GM12878 (cell line): ENCODE measurements at regions of chr15 and their contacts with region 1.

Region 1: DNA sequence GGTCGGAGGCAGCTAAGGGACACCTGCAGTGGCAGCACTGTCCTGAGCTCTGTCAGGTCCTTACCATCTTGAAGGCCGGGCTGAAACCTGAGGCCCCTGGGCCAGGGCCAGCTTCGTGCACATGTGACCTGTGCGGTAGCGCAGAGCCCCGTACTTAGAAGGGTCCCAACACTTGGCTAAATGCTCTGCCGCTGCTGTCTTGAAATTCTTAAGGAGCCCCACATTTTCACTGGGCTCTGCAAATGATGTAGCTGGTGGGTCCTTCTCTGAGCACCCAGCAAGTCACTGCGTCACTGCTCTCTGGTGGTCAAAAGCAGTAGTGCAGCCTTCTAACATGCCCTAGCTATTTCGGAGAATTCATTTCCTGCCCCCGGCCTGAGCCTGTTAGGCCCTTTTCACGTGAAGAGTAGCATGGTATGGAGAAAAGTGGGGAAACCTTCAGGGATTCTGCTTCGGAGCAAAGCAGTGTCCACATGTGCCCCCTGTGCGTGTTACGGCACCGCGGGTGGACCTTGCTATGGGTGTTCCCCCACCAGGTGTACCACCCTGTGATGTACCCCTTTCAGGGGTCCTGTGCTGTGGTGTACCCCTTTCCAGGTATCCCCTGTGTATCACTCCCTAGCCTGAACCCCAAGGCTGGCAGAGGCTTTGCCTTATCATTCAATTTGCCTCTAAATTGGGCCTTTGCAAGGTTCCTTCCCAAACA is 79.7 kb downstream of the TMEM266 start:
- DNase-seq: peak; percentile 51
- ATAC-seq: peak; percentile 96
- H3K4me3 ChIP-seq: no peak overlapping the region
- H3K27ac ChIP-seq: no peak overlapping the region
- H3K4me1 ChIP-seq: no peaks in the 10 kb centered on the region
- H3K27me3 ChIP-seq: no peaks in the 10 kb centered on the region; a peak in 1 of 4 replicates
- CTCF ChIP-seq: peak; percentile 92 to 97 (median 94)
- EP300 ChIP-seq: no peak
- POLR2A ChIP-seq: no peak
- RAD21 ChIP-seq: peak; percentile 93

Region 2: DNA sequence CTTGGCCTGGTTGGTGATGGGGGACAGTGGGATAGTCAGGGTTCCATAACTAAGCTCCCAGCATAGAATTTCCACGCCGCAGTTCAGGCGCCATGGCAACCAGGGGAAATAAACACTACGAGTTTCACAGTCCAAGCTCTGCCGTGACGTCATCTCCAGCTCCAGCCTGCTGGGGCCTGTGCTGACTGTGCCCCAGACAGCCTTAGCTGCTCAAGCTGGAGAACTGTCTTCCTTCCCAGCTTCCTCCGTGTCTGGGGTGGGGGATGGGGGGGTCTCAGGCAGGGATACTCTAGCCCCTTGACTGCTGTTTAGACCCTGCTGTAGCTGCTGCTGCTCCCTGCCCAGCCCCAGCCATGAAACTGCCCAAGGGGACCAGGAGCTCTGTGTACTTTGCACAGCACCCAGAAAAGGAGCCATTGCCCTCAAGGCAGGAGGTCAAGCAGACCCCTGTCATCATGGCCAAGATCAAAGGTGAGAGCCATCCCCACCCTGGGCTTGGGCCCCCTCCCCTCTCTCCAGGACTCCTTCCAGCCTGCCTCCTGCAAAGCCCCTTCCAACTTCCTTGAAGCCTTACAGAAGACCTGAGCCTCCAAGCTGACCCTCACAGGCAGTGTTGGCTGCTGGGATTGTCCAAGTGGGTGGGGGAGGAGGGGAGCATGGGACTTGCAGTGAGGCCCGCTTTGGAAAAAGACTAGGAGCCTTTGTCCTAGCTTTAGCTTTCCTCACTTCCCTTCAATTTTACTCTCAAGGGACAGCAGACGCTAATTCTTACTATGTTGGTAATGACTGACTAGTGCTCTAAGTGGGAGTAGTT is 415.5 kb before region 1 on chr15:
- CTCF ChIA-PET with region 1: no interaction called
- POLR2A ChIA-PET with region 1: no interaction called
- RAD21 ChIA-PET with region 1: no interaction called
- SMC1A ChIA-PET with region 1: no interaction called
- in situ Hi-C with region 1: loop called (anchors 10 kb)
- intact Hi-C with region 1: no loop called
- DNase-seq: no peak
- ATAC-seq: peak; percentile 86
- H3K4me3 ChIP-seq: no peak overlapping the region
- H3K27ac ChIP-seq: no peak overlapping the region
- H3K4me1 ChIP-seq: peaks cover 3% of the 10 kb centered on the region; the same call in 1 of the 2 replicates
- H3K27me3 ChIP-seq: no peaks in the 10 kb centered on the region
- CTCF ChIP-seq: no peak
- EP300 ChIP-seq: peak in 1 of 2 experiments; percentile 37; a peak in 1 of 4 replicates
- POLR2A ChIP-seq: no peak
- RAD21 ChIP-seq: no peak

Region 3: GRCh38 chr15:75809986-75810750 is 329.4 kb before region 1 on chr15:
- CTCF ChIA-PET with region 1: interaction called, 74 read pairs
- POLR2A ChIA-PET with region 1: interaction called, 3 read pairs
- RAD21 ChIA-PET with region 1: interaction called, 44 read pairs
- SMC1A ChIA-PET with region 1: interaction called, 44 read pairs
- in situ Hi-C with region 1: loop called (anchors 5 kb)
- intact Hi-C with region 1: loop called (anchors 2 kb)
- DNase-seq: no peak
- ATAC-seq: peak; percentile 85
- H3K4me3 ChIP-seq: no peak overlapping the region
- H3K27ac ChIP-seq: no peak overlapping the region
- H3K4me1 ChIP-seq: no peaks in the 10 kb centered on the region
- H3K27me3 ChIP-seq: no peaks in the 10 kb centered on the region; a peak in 1 of 4 replicates
- CTCF ChIP-seq: peak; percentile 45 to 68 (median 55); a peak in 5 of 6 replicates
- EP300 ChIP-seq: no peak
- POLR2A ChIP-seq: no peak
- RAD21 ChIP-seq: peak; percentile 71

Region 4: DNA sequence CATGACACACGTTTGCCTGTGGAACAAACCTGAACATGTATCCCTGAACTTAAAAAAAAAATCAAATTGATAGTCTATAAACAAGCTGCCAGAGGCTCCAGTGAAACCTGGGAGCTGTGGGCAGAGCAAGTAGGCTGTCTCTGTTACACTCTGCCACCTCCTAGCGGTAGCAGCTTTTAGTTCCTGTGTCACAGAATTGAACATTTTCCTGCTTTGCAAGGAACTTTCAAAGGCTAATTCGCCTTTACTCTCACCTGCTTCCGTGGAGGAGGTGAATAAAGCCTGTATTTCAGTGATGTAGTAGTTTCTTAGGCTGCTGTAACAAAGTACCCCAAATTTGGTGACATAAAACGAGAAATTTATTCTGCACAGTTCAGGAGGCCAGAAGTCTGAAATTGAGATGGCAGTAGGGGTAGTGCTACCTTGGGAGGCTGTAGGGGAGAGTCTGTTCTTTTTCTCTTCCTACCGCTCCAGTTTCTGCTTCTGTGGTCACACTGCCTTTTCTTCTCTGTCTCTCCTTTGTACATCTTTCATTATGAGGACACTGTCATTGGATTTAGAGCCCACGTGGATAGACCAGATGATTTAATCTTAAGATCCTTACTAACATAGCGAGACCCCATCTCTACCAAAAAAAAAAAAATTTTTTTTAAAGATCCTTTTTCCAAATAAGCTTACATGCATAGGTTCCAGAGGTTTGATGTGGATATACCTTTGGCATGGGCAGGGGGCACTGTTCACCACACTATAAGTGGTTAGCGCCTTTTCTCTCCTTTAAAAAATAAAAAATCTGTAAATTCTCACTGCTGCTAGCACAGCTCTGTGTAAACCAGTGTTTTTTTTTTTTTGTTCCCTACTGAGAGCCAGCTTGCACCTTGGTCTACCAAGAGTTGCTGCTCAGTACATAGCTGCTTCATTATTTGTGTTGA is 210.6 kb before region 1 on chr15:
- CTCF ChIA-PET with region 1: interaction called, 22 read pairs
- POLR2A ChIA-PET with region 1: no interaction called
- RAD21 ChIA-PET with region 1: interaction called, 13 read pairs
- SMC1A ChIA-PET with region 1: interaction called, 8 read pairs
- in situ Hi-C with region 1: no loop called
- intact Hi-C with region 1: no loop called
- DNase-seq: no peak
- ATAC-seq: peak; percentile 80
- H3K4me3 ChIP-seq: no peak overlapping the region
- H3K27ac ChIP-seq: no peak overlapping the region
- H3K4me1 ChIP-seq: peaks cover 7% of the 10 kb centered on the region
- H3K27me3 ChIP-seq: no peaks in the 10 kb centered on the region
- CTCF ChIP-seq: peak; percentile 39 to 54 (median 50); a peak in 5 of 6 replicates
- EP300 ChIP-seq: no peak
- POLR2A ChIP-seq: no peak
- RAD21 ChIP-seq: peak; percentile 74

Region 5: GRCh38 chr15:76057332-76058000 is 82.1 kb before region 1 on chr15:
- CTCF ChIA-PET with region 1: interaction called, 347 read pairs
- POLR2A ChIA-PET with region 1: interaction called, 23 read pairs
- RAD21 ChIA-PET with region 1: interaction called, 214 read pairs
- SMC1A ChIA-PET with region 1: interaction called, 217 read pairs
- in situ Hi-C with region 1: no loop called
- intact Hi-C with region 1: loop called (anchors 1 kb)
- DNase-seq: no peak
- ATAC-seq: peak; percentile 53
- H3K4me3 ChIP-seq: peak overlapping the region; percentile 22; the same call in 1 of the 2 replicates
- H3K27ac ChIP-seq: peak overlapping the region; percentile 63; the same call in 1 of the 2 replicates
- H3K4me1 ChIP-seq: peaks cover 28% of the 10 kb centered on the region
- H3K27me3 ChIP-seq: no peaks in the 10 kb centered on the region
- CTCF ChIP-seq: peak; percentile 60 to 70 (median 68)
- EP300 ChIP-seq: no peak
- POLR2A ChIP-seq: no peak
- RAD21 ChIP-seq: peak; percentile 58

Region 6: DNA sequence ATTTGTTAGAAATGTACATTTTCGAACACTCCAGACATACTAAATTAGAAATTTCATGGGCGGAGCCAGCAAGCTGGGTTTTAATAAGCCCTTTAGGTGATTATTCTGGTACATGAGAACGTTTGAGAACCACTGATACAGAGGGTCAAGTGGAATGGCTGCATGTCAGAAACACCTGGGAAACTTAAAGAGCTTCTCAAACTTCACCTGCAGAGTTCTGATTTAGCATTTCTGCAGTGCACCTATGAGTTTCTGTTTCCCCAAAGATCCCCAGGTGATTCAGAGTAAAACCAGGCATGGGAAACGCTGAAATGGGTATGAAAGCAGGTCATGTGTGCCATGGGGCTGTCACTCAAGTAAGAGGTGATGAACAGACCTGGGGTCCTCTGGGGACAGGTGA is 11.6 kb before region 1 on chr15:
- CTCF ChIA-PET with region 1: interaction called, 17 read pairs
- POLR2A ChIA-PET with region 1: interaction called, 8 read pairs
- RAD21 ChIA-PET with region 1: interaction called, 8 read pairs
- SMC1A ChIA-PET with region 1: interaction called, 10 read pairs
- in situ Hi-C with region 1: no loop called
- intact Hi-C with region 1: no loop called
- DNase-seq: no peak
- ATAC-seq: no peak
- H3K4me3 ChIP-seq: no peak overlapping the region
- H3K27ac ChIP-seq: no peak overlapping the region
- H3K4me1 ChIP-seq: no peaks in the 10 kb centered on the region
- H3K27me3 ChIP-seq: no peaks in the 10 kb centered on the region; a peak in 1 of 4 replicates
- CTCF ChIP-seq: no peak
- EP300 ChIP-seq: no peak
- POLR2A ChIP-seq: no peak
- RAD21 ChIP-seq: no peak

Region 7: GRCh38 chr15:76181705-76182107 is 42.2 kb after region 1 on chr15:
- CTCF ChIA-PET with region 1: no interaction called
- POLR2A ChIA-PET with region 1: no interaction called
- RAD21 ChIA-PET with region 1: no interaction called
- SMC1A ChIA-PET with region 1: no interaction called
- in situ Hi-C with region 1: no loop called
- intact Hi-C with region 1: no loop called
- DNase-seq: peak; percentile 78
- ATAC-seq: peak; percentile 93
- H3K4me3 ChIP-seq: no peak overlapping the region
- H3K27ac ChIP-seq: peak overlapping the region; percentile 59
- H3K4me1 ChIP-seq: peaks cover 12% of the 10 kb centered on the region
- H3K27me3 ChIP-seq: peaks cover 0 to 4% of the 10 kb centered on the region in 2 experiments
- CTCF ChIP-seq: no peak
- EP300 ChIP-seq: peak; percentile 47 to 70; a peak in 2 of 4 replicates
- POLR2A ChIP-seq: no peak
- RAD21 ChIP-seq: no peak

Region 8: DNA sequence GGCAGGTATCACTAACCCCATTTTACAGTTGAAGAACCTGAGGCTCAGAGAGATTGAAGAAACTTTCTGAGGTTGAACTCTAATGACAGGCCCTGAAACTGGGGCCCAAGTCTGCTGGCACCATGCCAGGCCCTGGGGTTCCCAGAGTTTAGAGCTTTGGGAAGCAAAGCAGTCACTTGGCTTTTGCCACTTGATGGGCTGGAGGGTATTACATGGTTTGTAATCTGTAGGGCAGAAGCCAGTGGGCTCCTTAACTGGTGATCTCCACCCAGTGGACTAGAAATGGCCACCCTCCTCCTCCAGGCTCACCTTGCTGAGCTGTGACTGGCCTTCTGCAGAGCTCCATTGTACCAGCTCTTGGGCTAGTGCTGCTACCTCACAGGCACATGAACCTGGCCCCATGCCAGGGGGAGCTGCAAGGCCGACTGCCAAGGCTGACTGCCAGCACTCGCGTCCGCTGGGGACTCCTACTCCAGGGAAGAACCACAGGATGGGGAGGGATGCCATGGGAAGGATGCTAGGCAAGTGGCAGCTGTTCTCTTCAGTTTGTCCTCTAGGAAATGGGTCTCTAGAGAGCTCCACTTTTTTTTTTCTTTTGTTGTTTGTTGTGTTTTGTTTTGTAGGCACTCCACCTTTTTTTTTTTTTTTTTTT is 66.9 kb after region 1 on chr15:
- CTCF ChIA-PET with region 1: no interaction called
- POLR2A ChIA-PET with region 1: no interaction called
- RAD21 ChIA-PET with region 1: no interaction called
- SMC1A ChIA-PET with region 1: no interaction called
- in situ Hi-C with region 1: no loop called
- intact Hi-C with region 1: no loop called
- DNase-seq: no peak
- ATAC-seq: no peak
- H3K4me3 ChIP-seq: no peak overlapping the region
- H3K27ac ChIP-seq: no peak overlapping the region
- H3K4me1 ChIP-seq: no peaks in the 10 kb centered on the region
- H3K27me3 ChIP-seq: no peaks in the 10 kb centered on the region
- CTCF ChIP-seq: no peak
- EP300 ChIP-seq: no peak
- POLR2A ChIP-seq: 0 out of 2 replicates have a peak, but pooled peaks have one; percentile 29
- RAD21 ChIP-seq: no peak